HepG2 (cell line): ENCODE measurements at regions of chr1 and their contacts with region 1.

Region 1: DNA sequence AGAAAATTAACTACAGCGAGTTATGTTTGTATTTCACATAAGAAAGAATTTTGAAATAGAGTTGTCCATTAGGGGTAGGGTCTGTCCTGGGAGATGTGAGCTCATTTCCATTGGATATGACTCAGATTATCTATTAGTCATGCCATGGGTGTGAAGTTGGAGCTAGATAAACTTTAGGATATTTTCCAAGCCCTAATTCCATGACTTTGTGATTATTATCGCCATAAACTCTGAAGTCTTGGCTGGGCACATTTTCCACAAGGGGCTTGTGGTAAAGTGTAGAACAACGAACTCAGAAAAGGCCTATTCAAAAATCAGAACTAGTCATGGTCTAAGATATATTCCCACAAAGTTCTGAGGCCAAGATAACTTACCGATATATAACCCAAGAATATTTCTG is 396.6 kb downstream of the DPYD start:
- DNase-seq: no peak
- ATAC-seq: no peak
- H3K4me3 ChIP-seq: no peak overlapping the region
- H3K27ac ChIP-seq: no peak overlapping the region
- H3K4me1 ChIP-seq: no peaks in the 10 kb centered on the region
- H3K27me3 ChIP-seq: no peaks in the 10 kb centered on the region
- CTCF ChIP-seq: no peak
- EP300 ChIP-seq: no peak
- POLR2A ChIP-seq: no peak
- RAD21 ChIP-seq: no peak

Region 2: DNA sequence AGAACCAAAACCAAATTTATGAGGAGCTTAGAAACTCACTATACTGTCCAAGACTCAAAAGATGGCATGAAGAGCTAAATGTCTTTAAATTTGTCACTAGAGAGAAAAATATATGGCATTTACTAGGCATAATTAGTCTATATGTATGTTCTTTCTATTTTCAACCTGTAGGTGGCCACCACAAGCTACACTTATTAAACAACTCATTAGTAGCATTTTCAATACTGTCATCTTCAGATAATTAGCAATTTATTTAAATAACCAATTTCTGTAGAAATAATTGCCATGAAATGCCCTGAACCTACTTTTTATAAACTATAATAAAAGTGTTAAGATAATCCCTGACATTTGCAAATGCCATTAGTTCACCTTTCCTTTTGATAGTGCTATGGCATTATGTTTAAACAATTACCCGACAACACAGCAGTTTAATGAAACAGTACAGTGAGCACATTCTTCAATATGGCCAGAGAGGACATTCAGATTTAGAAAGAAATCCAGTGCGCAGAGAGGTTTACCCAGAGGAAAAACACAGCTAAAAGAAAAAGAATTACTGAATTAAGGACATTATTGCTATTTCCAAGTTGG is 280.1 kb before region 1 on chr1:
- CTCF ChIA-PET with region 1: no interaction called
- POLR2A ChIA-PET with region 1: no interaction called
- in situ Hi-C with region 1: no loop called
- intact Hi-C with region 1: loop called (anchors 10 kb)
- DNase-seq: no peak
- ATAC-seq: no peak
- H3K4me3 ChIP-seq: no peak overlapping the region
- H3K27ac ChIP-seq: no peak overlapping the region
- H3K4me1 ChIP-seq: no peaks in the 10 kb centered on the region
- H3K27me3 ChIP-seq: no peaks in the 10 kb centered on the region
- CTCF ChIP-seq: 0 out of 2 replicates have a peak, but pooled peaks have one; percentile 5
- EP300 ChIP-seq: no peak
- POLR2A ChIP-seq: no peak
- RAD21 ChIP-seq: no peak

Region 3: DNA sequence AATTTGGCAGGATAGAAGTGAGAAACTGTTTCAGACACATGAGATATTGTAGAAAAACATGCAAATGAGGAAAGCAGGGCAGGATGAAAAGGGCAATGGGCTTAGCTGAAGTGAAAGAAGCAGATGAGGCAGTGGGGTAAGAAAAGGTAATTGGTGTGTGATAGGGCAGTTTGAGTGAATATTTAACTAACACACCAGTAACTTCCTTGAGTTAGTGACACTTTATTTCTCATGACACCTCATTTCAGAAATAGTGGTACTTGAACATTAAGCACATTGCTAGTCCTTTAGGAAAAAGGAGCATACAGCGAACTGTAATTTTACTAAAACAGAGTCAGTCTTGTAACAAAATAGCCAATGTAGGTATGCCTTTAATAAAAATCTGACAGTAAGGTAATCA is 18.4 kb before region 1 on chr1:
- CTCF ChIA-PET with region 1: no interaction called
- POLR2A ChIA-PET with region 1: no interaction called
- in situ Hi-C with region 1: no loop called
- intact Hi-C with region 1: no loop called
- DNase-seq: no peak
- ATAC-seq: no peak
- H3K4me3 ChIP-seq: no peak overlapping the region
- H3K27ac ChIP-seq: no peak overlapping the region
- H3K4me1 ChIP-seq: peaks cover 5% of the 10 kb centered on the region; the same call in 1 of the 2 replicates
- H3K27me3 ChIP-seq: no peaks in the 10 kb centered on the region
- CTCF ChIP-seq: no peak
- EP300 ChIP-seq: no peak
- POLR2A ChIP-seq: no peak
- RAD21 ChIP-seq: no peak